ENCODE measurements at regions of chr12 and their contacts with region 1.

Region 1: GRCh38 chr12:74537707-74538385 is at the start of gene ATXN7L3B:
- DNase-seq: peak; percentile 98
- H3K4me3 Mint-ChIP-seq: peak within 1 kb of the TSS; percentile 99
- H3K27ac Mint-ChIP-seq: peak within 1 kb of the TSS; percentile 100
- H3K4me1 Mint-ChIP-seq: peaks cover 22% of the 10 kb centered on the region
- H3K27me3 Mint-ChIP-seq: no peaks in the 10 kb centered on the region
- CTCF ChIP-seq: no peak
- total RNA-seq, gene ATXN7L3B: 50.6 and 59.7 TPM in 2 replicates

Region 2: GRCh38 chr12:73947326-73948027 is 590.4 kb before region 1 on chr12:
- CTCF ChIA-PET with region 1: no interaction called
- intact Hi-C with region 1: loop called (anchors 10 kb)
- DNase-seq: no peak
- H3K4me3 Mint-ChIP-seq: no peak overlapping the region
- H3K27ac Mint-ChIP-seq: no peak overlapping the region
- H3K4me1 Mint-ChIP-seq: no peaks in the 10 kb centered on the region
- H3K27me3 Mint-ChIP-seq: no peaks in the 10 kb centered on the region
- CTCF ChIP-seq: no peak

Region 3: GRCh38 chr12:74021937-74022336 is 515.9 kb before region 1 on chr12:
- CTCF ChIA-PET with region 1: no interaction called
- intact Hi-C with region 1: loop called (anchors 10 kb)
- DNase-seq: peak; percentile 85
- H3K4me3 Mint-ChIP-seq: no peak overlapping the region
- H3K27ac Mint-ChIP-seq: no peak overlapping the region
- H3K4me1 Mint-ChIP-seq: peaks cover 10% of the 10 kb centered on the region
- H3K27me3 Mint-ChIP-seq: no peaks in the 10 kb centered on the region
- CTCF ChIP-seq: peak; percentile 64

Region 4: DNA sequence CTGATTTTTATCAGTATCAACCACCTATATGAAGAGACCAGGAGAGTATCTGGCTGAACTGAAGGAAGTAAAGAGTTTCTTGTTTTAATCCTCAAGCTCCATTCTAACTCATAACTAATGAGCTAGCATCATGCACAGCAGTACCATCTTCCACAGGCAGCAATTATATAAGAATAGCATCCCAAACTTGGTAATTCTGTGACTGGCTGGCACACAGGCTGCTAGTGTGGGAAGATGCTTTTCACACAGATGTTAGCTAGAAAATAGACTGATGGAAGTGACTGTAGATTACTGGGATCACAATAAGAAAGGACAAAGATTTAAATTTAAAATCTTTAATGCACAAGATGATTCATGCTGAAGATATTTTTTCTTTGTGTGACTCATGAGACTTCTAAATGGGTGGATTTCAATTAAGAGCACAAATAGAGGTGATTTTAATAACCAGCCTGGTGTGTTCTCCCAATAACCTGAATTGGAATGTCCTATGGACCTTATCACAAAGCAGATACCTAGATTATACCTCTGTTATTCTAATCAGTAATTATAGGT is 418.0 kb before region 1 on chr12:
- CTCF ChIA-PET with region 1: no interaction called
- intact Hi-C with region 1: loop called (anchors 5 kb)
- DNase-seq: no peak
- H3K4me3 Mint-ChIP-seq: no peak overlapping the region
- H3K27ac Mint-ChIP-seq: no peak overlapping the region
- H3K4me1 Mint-ChIP-seq: peaks cover 15% of the 10 kb centered on the region
- H3K27me3 Mint-ChIP-seq: no peaks in the 10 kb centered on the region
- CTCF ChIP-seq: no peak

Region 5: DNA sequence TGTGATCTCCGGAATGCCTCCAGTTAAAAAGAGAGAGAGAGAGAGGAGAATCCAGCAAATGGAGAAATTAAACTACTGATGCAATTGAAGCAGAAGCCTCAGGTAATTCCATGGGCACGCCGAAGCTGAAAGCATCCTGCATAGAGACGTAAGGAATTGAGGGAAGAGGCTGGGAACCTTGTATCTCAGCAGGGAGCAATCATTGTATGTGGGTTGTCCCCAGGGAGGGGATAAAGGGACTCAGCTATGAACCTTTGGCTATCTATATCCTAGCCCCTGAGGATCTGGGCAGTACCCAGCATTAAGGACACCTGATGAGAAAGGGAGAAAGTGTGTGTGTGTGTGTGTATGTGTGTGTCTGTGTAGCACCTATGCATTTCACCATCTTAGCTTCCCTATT is 96.0 kb before region 1 on chr12:
- CTCF ChIA-PET with region 1: no interaction called
- intact Hi-C with region 1: no loop called
- DNase-seq: no peak
- H3K4me3 Mint-ChIP-seq: no peak overlapping the region
- H3K27ac Mint-ChIP-seq: no peak overlapping the region
- H3K4me1 Mint-ChIP-seq: no peaks in the 10 kb centered on the region
- H3K27me3 Mint-ChIP-seq: no peaks in the 10 kb centered on the region
- CTCF ChIP-seq: no peak

Region 6: DNA sequence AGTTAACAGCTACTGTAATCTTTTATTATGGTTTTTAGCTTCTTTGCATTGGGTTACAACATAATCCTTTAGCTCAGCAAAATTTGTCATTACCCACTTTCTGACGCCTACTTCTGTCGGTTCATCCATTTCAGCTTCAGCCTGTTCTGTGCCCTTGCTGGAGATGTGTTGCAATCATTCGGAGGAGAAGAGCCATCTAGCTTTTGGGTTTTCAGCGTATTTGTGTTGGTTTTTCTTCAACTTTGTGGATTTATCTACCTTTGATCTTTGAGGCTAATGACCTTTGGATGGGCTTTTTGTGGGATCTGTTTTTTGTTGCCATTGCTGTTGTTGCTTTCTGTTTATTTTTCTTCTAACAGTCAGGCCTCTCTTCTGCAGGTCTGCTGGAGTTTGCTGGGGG is 69.4 kb before region 1 on chr12:
- CTCF ChIA-PET with region 1: no interaction called
- intact Hi-C with region 1: no loop called
- DNase-seq: no peak
- H3K4me3 Mint-ChIP-seq: no peak overlapping the region
- H3K27ac Mint-ChIP-seq: no peak overlapping the region
- H3K4me1 Mint-ChIP-seq: no peaks in the 10 kb centered on the region
- H3K27me3 Mint-ChIP-seq: no peaks in the 10 kb centered on the region
- CTCF ChIP-seq: no peak

Region 7: DNA sequence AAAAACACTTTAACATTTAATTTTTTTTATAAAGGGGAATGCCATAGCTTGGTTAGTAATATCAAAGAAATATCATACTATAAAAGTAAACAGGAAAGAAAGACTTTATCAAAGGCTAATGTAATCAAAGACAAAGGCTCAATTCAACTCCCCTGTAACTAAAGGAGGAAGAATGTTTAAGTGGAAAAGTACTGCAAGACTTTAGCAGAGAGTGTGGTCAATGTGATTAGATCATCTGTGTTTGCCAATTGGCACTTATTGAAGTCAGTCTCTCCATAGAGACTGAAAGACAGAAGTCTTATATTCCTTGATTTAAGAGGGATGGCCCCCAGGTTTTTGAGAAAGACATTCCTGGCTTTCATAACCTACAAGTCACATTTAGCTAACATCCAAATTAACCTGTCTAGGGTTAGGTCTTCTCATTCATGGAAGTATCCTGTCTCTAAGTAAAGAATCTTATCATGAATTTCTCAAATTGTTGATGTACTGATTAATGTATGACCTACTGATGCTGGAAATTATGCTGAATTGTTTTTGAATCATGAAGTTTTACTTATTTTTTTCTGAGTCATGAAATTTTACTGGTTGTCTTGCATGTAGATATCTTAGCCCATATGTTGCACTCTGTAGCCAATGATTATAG is 65.2 kb after region 1 on chr12:
- CTCF ChIA-PET with region 1: no interaction called
- intact Hi-C with region 1: loop called (anchors 5 kb)
- DNase-seq: peak; percentile 31
- H3K4me3 Mint-ChIP-seq: peak overlapping the region; percentile 52
- H3K27ac Mint-ChIP-seq: peak overlapping the region; percentile 100
- H3K4me1 Mint-ChIP-seq: peaks cover 50% of the 10 kb centered on the region
- H3K27me3 Mint-ChIP-seq: no peaks in the 10 kb centered on the region
- CTCF ChIP-seq: no peak